ENCODE measurements at regions of chr3 and their contacts with region 1.

Region 1: DNA sequence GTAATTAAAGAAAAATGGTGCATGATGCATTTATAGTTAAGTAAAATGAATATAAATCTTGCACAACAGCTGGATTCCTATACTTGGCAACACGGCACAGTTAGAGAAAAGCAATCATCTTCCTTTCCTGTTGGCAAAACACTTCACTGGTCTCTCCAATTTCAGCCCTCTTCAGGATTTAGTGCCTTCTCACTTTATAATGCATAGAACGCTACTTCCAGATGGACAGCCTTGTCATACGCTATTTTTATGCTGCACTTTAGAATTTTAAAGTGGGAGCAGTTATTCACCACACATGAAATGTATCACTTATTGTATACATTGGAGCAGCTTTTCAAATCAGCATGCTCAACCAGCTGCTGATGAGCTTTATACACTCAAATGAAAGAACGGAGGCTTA is 194.4 kb upstream of the GBE1 start:
- DNase-seq: no peak
- ATAC-seq: no peak
- H3K4me3 ChIP-seq: no peak overlapping the region
- H3K27ac ChIP-seq: no peak overlapping the region
- H3K4me1 ChIP-seq: no peaks in the 10 kb centered on the region
- H3K27me3 ChIP-seq: no peaks in the 10 kb centered on the region
- CTCF ChIP-seq: no peak

Region 2: DNA sequence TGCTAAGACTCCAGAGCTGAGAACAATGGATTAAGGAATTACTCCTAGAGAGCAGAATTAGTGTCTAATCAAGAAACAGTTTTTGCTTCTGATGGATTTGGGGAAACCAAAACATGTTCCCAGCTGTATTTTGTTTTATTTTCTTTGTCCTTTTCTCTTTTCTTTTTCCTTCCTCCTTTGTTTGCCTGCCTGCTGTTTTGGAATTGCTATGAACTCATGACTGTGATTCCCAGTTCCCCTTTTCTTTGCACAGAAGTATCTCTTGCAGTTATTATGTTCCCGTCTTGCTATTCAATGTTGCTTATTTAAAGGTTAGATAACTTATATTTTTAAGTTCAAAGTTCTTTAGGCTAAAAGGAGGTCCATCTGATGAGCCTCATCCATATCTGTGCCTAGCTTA is 117.4 kb before region 1 on chr3:
- CTCF ChIA-PET with region 1: no interaction called
- POLR2A ChIA-PET with region 1: no interaction called
- intact Hi-C with region 1: no loop called
- DNase-seq: no peak
- ATAC-seq: no peak
- H3K4me3 ChIP-seq: no peak overlapping the region
- H3K27ac ChIP-seq: no peak overlapping the region
- H3K4me1 ChIP-seq: peaks cover 16% of the 10 kb centered on the region
- H3K27me3 ChIP-seq: no peaks in the 10 kb centered on the region
- CTCF ChIP-seq: no peak

Region 3: DNA sequence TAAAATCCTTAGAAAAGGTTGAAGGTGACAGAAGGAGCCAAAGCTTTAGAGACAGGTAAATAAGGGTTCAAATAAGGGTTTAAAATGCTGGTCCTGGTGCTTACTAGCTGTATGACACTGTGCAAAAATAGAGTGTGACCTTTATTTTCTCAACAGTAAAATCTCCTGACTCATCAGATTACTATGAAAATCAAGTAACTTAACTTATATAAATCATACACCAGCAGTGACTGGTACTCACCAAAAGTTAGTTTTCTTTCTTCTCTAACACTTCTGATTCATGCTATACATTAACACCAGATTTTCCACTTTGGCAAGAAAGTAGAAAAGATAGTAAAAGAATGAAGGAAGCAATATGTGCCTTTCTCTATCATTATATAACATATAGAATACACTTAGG is 11.5 kb after region 1 on chr3:
- CTCF ChIA-PET with region 1: no interaction called
- POLR2A ChIA-PET with region 1: interaction called, 10 read pairs
- intact Hi-C with region 1: no loop called
- DNase-seq: peak; percentile 38
- ATAC-seq: peak; percentile 71
- H3K4me3 ChIP-seq: no peak overlapping the region
- H3K27ac ChIP-seq: no peak overlapping the region
- H3K4me1 ChIP-seq: peaks cover 4% of the 10 kb centered on the region; the same call in 1 of the 2 replicates
- H3K27me3 ChIP-seq: no peaks in the 10 kb centered on the region
- CTCF ChIP-seq: no peak